ENCODE measurements at regions of chr10 and their contacts with region 1.

Region 1: DNA sequence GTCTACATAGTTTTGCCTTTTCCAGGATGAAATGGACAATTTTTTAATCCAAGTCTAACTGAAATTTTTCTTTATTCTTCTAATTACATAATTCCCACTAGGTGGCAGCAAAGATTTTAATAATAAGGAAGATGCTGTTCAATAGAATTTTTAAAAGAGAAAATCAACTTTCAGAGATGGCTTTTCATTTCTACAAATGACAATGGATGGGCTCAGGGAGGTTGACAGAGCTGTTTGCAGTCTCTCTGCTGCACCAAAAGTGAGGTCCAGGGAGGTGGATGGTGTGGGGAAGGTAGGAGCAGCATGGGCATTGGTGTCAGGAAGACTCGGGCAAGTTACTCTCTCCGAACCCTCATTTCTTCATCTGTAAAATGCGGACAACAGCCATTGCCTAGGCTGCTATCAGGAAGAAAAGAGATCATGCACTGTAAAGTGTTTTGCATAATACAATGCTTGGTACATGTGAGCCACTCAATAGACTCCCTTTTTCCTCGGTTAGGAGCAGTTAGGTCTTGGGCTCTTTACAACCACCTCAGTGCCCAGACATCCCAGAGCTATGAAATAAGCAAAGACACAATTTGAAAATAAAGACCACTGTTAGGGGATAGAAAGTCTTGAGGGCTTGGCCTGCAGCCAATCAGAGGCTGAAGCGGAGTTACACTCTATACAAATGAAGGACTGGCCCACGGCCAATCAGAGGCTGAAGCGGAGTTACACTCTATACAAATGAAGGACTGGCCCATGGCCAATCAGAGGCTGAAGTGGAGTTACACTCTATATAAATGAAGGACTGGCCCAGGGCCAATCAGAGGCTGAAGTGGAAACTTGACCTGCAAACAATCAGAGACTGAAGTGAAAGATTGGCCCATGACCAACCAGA is 107.1 kb downstream of the ABLIM1 start:
- DNase-seq: peak; percentile 67
- H3K4me3 ChIP-seq: no peak overlapping the region
- H3K27ac ChIP-seq: no peak overlapping the region
- H3K4me1 ChIP-seq: peaks cover 16% of the 10 kb centered on the region
- CTCF ChIP-seq: peak; percentile 93

Region 2: GRCh38 chr10:114703377-114704107 is 152.5 kb after region 1 on chr10:
- CTCF ChIA-PET with region 1: interaction called, 3 read pairs
- POLR2A ChIA-PET with region 1: no interaction called
- intact Hi-C with region 1: loop called (anchors 2 kb)
- DNase-seq: peak; percentile 48
- H3K4me3 ChIP-seq: no peak overlapping the region
- H3K27ac ChIP-seq: no peak overlapping the region
- H3K4me1 ChIP-seq: no peaks in the 10 kb centered on the region
- CTCF ChIP-seq: peak; percentile 91

Region 3: DNA sequence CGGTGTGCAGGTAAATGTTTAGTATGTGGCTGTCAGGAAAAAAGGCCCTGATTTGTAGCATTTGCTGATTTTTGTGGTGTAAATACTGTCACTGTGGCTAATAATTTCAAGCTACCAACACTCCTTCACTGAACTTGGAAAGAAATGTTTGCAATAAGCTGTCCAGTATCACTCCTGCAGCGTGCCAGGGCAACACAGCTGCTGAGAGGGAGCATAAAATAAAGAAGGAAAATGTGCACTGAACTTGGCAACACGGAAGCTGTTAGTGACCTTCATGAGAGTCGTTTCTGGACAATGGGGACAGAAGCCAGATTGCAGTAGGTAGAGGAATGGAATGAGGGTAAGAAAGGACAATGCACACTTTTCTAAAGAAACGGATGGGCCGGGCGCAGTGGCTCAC is 232.7 kb after region 1 on chr10:
- CTCF ChIA-PET with region 1: no interaction called
- POLR2A ChIA-PET with region 1: no interaction called
- intact Hi-C with region 1: loop called (anchors 2 kb)
- DNase-seq: no peak
- H3K4me3 ChIP-seq: no peak overlapping the region
- H3K27ac ChIP-seq: no peak overlapping the region
- H3K4me1 ChIP-seq: no peaks in the 10 kb centered on the region
- CTCF ChIP-seq: no peak

Region 4: GRCh38 chr10:114876602-114877300 is 325.8 kb after region 1 on chr10:
- CTCF ChIA-PET with region 1: no interaction called
- POLR2A ChIA-PET with region 1: interaction called, 3 read pairs
- intact Hi-C with region 1: loop called (anchors 2 kb)
- DNase-seq: peak; percentile 61
- H3K4me3 ChIP-seq: no peak overlapping the region
- H3K27ac ChIP-seq: no peak overlapping the region
- H3K4me1 ChIP-seq: no peaks in the 10 kb centered on the region
- CTCF ChIP-seq: peak; percentile 77

Region 5: GRCh38 chr10:115129752-115130151 is 578.8 kb after region 1 on chr10:
- CTCF ChIA-PET with region 1: no interaction called
- POLR2A ChIA-PET with region 1: no interaction called
- intact Hi-C with region 1: loop called (anchors 5 kb)
- DNase-seq: peak; percentile 45
- H3K4me3 ChIP-seq: no peak overlapping the region
- H3K27ac ChIP-seq: no peak overlapping the region
- H3K4me1 ChIP-seq: no peaks in the 10 kb centered on the region
- CTCF ChIP-seq: peak; percentile 80

Measured in OCI-LY7 (cell line).